Naive thymus-derived CD4-positive, alpha-beta T cell (primary cell): ENCODE measurements at regions of chr6 and their contacts with region 1.

Region 1: DNA sequence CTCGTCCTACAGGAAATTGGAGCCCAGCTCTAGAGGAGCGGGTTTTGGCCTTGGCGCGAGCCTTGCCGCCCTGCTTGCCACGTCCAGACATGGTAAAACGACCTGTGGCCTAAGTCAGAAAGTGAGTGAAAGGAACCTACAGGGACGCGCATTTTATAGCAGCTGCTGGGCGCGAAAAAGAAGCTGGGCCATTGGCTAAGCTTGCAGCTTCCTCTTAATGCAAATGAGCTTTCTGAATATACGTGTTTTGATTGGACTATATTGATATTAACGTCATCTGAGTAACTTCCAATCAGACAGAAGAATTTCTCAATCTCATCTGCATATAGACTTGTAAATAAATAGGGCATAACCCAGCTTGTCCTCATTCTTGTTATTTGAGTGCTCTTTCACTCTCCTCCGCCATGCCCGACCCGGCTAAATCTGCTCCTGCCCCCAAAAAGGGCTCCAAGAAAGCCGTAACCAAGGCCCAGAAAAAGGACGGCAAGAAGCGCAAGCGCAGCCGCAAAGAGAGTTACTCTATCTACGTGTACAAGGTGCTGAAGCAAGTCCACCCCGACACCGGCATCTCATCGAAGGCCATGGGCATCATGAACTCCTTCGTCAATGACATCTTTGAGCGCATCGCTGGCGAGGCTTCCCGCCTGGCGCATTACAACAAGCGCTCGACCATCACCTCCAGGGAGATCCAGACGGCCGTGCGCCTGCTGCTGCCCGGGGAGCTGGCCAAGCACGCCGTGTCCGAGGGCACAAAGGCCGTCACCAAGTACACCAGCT is 18.9 kb downstream of the OR2B2 start:
- DNase-seq: peak; percentile 75 to 95 (median 92)
- ATAC-seq: peak; percentile 83
- H3K4me3 ChIP-seq: peak overlapping the region; percentile 72
- H3K4me3 Mint-ChIP-seq: no peak overlapping the region
- H3K27ac ChIP-seq: peak overlapping the region; percentile 82
- H3K27ac Mint-ChIP-seq: peak overlapping the region in 1 of 9 donors; percentile 97
- H3K4me1 ChIP-seq: peaks cover 4 to 20% of the 10 kb centered on the region in 2 donors
- H3K4me1 Mint-ChIP-seq: peaks cover 9 to 55% (median 30%) of the 10 kb centered on the region in 7 donors
- H3K27me3 ChIP-seq: no peaks in the 10 kb centered on the region
- H3K27me3 Mint-ChIP-seq: peaks cover 0 to 8% (median 0%) of the 10 kb centered on the region in 5 donors

Region 2: DNA sequence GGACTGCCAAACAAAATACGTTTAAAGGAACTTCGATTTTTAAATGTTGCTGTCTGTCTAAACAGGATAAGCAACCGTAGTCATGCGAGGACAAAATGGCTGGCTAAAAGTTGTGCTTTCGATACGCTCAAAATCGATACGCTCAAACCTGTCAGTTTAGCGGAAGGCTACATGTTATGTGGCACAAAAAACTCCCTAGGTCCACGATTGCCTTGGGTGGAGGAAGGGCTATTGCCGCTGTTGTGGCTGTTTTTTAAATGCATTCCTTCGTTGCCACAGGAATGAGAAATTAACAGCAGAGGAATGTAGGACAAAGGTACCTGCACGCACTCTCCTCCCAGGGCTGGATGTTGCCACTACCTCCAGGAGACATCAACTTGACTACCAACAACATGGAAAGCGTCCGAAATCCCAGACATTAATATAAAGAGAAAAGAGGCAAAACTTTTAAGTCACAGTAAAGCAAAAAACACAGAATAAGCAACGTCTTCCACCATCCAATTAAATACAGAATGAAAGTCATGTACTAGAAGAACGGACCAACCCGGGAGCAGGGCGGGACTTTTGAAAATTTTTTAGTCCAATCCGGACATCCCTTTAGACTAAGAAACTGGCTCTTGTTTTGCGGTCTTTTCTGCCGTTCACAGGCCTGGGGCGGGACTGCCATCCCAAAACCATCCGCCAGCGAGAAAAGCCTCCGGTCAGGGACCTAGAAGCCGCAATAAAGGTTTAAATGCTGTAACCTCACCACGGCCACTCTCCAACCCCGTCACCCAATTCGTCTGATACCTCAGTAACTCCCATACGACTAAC is 1838.2 kb before region 1 on chr6:
- CTCF ChIA-PET with region 1: no interaction called
- POLR2A ChIA-PET with region 1: interaction called, 7 read pairs
- intact Hi-C with region 1: loop called in 1 of 2 experiments (anchors 5 kb)
- DNase-seq: peak; percentile 54 to 94 (median 90)
- ATAC-seq: peak; percentile 81
- H3K4me3 ChIP-seq: peak overlapping the region; percentile 93
- H3K4me3 Mint-ChIP-seq: peak overlapping the region; percentile 88 to 99 (median 95)
- H3K27ac ChIP-seq: peak overlapping the region; percentile 83
- H3K27ac Mint-ChIP-seq: peak overlapping the region; percentile 95 to 99 (median 98)
- H3K4me1 ChIP-seq: peaks cover 0 to 14% of the 10 kb centered on the region in 2 donors
- H3K4me1 Mint-ChIP-seq: peaks cover 9 to 52% (median 10%) of the 10 kb centered on the region in 7 donors
- H3K27me3 ChIP-seq: no peaks in the 10 kb centered on the region
- H3K27me3 Mint-ChIP-seq: peaks cover 0 to 10% (median 0%) of the 10 kb centered on the region in 5 donors

Region 3: GRCh38 chr6:26568601-26569432 is 1324.4 kb before region 1 on chr6:
- CTCF ChIA-PET with region 1: no interaction called
- POLR2A ChIA-PET with region 1: no interaction called
- intact Hi-C with region 1: loop called in 1 of 2 experiments (anchors 10 kb)
- DNase-seq: peak; percentile 96 to 99 (median 98)
- ATAC-seq: peak; percentile 84
- H3K4me3 ChIP-seq: peak overlapping the region; percentile 90
- H3K4me3 Mint-ChIP-seq: peak overlapping the region; percentile 90 to 100 (median 95)
- H3K27ac ChIP-seq: peak overlapping the region; percentile 74
- H3K27ac Mint-ChIP-seq: peak overlapping the region; percentile 96 to 100 (median 99)
- H3K4me1 ChIP-seq: peaks cover 0 to 3% of the 10 kb centered on the region in 2 donors
- H3K4me1 Mint-ChIP-seq: peaks cover 11 to 42% (median 26%) of the 10 kb centered on the region in 7 donors
- H3K27me3 ChIP-seq: no peaks in the 10 kb centered on the region
- H3K27me3 Mint-ChIP-seq: peaks cover 0 to 12% (median 0%) of the 10 kb centered on the region in 5 donors

Region 4: GRCh38 chr6:27157459-27158315 is 735.6 kb before region 1 on chr6:
- CTCF ChIA-PET with region 1: interaction called, 10 read pairs
- POLR2A ChIA-PET with region 1: interaction called, 29 read pairs
- intact Hi-C with region 1: loop called (anchors 1 kb)
- DNase-seq: peak in 8 of 9 donors; percentile 77 to 92 (median 87)
- ATAC-seq: peak; percentile 86
- H3K4me3 ChIP-seq: peak overlapping the region; percentile 76
- H3K4me3 Mint-ChIP-seq: peak overlapping the region; percentile 82 to 94 (median 87)
- H3K27ac ChIP-seq: peak overlapping the region; percentile 54
- H3K27ac Mint-ChIP-seq: peak overlapping the region; percentile 80 to 96 (median 92)
- H3K4me1 ChIP-seq: peaks cover 12% of the 10 kb centered on the region in 2 donors
- H3K4me1 Mint-ChIP-seq: peaks cover 29 to 47% (median 43%) of the 10 kb centered on the region in 7 donors
- H3K27me3 ChIP-seq: no peaks in the 10 kb centered on the region
- H3K27me3 Mint-ChIP-seq: peaks cover 0 to 6% (median 0%) of the 10 kb centered on the region in 5 donors

Region 5: DNA sequence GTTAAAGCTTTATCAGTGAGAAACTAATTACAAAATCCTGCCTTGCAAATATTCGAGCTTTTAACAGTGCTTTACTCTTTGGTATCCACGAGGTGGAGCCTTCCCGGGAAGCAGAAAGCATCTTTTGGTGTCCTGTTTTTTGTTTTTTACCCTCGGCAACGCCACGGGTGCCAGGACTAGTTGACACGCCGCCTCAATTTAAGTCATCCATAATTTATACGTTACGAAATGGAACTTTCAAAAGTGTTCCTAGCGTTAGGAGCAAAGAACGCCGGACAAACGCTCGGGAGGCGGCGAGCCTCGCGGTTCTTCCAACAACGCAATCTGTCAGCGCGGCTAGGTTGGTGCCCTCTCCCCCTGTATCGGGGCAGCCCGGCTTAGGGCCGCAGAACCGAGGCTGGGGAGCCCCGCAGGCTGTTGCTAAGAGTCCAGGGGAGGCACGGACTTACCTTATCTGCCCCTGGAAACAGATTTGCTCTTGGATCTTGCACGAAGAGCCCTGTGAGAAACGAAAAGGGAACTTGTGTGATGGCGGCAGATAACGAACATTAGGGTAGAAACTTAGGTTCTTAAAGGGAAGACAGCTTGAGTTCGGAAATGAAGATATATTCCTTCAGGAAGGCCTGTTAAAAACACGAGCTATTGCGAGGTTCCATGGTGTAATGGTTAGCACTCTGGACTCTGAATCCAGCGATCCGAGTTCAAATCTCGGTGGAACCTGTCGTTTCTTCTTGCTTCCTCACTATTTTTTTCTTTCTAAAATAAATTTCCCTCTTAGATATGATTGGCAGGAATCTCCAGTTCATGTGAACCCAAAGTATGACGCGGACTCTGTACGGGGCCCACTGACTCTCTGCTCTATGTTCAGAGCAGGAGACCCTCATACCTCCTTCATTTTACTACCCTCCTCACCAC is 374.1 kb before region 1 on chr6:
- CTCF ChIA-PET with region 1: no interaction called
- POLR2A ChIA-PET with region 1: interaction called, 3 read pairs
- intact Hi-C with region 1: loop called in 1 of 2 experiments (anchors 2 kb)
- DNase-seq: peak; percentile 34 to 79 (median 68)
- ATAC-seq: peak; percentile 81
- H3K4me3 ChIP-seq: peak overlapping the region; percentile 96
- H3K4me3 Mint-ChIP-seq: peak overlapping the region; percentile 84 to 97 (median 91)
- H3K27ac ChIP-seq: peak overlapping the region; percentile 67
- H3K27ac Mint-ChIP-seq: peak overlapping the region; percentile 68 to 94 (median 84)
- H3K4me1 ChIP-seq: peaks cover 7 to 11% of the 10 kb centered on the region in 2 donors
- H3K4me1 Mint-ChIP-seq: peaks cover 0 to 31% (median 18%) of the 10 kb centered on the region in 7 donors
- H3K27me3 ChIP-seq: peaks cover 0 to 3% of the 10 kb centered on the region in 2 donors
- H3K27me3 Mint-ChIP-seq: peaks cover 0 to 40% (median 22%) of the 10 kb centered on the region in 5 donors

Region 6: DNA sequence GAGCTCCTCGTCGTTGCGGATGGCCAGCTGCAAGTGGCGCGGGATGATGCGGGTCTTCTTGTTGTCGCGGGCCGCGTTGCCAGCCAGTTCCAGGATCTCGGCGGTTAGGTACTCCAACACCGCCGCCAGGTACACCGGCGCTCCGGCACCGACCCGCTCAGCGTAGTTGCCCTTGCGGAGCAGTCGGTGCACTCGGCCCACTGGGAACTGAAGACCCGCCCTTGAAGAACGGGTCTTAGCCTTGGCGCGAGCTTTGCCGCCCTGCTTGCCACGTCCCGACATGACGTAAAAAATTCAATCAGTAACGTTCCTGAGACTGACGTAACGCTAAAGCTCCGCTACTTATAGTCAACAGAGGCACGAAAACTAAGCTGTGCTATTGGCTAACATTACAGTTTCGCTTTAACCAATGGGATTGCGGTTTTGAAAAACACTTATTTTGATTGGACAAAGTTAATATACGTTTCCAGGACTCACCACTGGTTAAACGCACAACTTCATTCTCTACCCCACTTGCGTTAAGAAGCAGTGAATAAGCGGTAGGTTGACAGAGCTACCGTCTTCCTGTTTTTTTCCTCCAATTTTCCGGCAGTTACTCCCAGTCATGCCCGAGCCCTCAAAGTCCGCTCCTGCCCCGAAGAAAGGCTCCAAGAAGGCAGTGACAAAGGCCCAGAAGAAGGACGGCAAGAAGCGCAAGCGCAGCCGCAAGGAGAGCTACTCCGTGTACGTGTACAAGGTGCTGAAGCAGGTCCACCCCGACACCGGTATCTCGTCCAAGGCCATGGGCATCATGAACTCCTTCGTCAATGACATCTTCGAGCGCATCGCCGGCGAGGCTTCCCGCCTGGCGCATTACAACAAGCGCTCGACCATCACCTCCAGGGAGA is 54.9 kb before region 1 on chr6:
- CTCF ChIA-PET with region 1: interaction called, 49 read pairs
- POLR2A ChIA-PET with region 1: interaction called, 397 read pairs
- intact Hi-C with region 1: loop called (anchors 1 kb)
- DNase-seq: peak; percentile 65 to 96 (median 93)
- ATAC-seq: peak; percentile 86
- H3K4me3 ChIP-seq: peak overlapping the region; percentile 87
- H3K4me3 Mint-ChIP-seq: no peak overlapping the region
- H3K27ac ChIP-seq: peak overlapping the region; percentile 93
- H3K27ac Mint-ChIP-seq: no peak overlapping the region
- H3K4me1 ChIP-seq: peaks cover 22 to 34% of the 10 kb centered on the region in 2 donors
- H3K4me1 Mint-ChIP-seq: peaks cover 7 to 39% (median 29%) of the 10 kb centered on the region in 7 donors
- H3K27me3 ChIP-seq: no peaks in the 10 kb centered on the region
- H3K27me3 Mint-ChIP-seq: peaks cover 0 to 14% (median 7%) of the 10 kb centered on the region in 5 donors

Region 7: DNA sequence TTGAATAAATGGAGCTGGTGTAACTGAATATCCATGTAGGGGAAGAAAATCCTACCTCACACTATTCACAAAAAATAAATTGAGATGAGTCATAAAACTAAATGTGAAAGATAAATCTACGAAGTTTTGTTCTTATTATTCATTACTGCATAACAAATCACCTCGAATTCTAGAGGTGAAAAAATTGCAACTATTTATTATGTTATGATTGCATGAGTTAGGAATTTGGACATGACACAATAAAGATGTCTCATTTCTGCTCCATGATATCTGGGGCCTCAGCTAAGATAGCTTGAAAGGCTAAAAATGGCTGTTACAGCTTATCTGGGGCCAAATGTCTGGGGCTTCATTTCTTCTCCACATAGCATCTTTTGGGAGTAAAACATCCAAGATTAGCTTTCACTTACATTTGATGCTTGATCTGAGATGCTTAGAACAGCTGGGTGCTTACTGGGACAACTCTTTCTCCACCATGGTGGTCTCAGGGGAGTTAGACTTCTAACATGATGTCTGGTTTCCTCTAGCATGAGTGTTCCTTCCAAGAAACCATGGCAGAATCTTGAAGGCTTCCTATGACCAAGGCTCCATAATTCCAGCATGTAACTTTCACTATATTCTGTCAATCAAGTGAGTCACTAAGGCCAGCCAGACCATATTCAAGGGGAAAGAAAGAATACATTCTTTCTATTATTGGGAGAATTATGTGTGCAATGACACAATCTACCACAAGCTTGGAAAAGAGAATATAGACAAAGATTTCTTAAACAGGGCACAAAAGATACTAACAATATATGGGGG is 93.9 kb after region 1 on chr6:
- CTCF ChIA-PET with region 1: no interaction called
- POLR2A ChIA-PET with region 1: no interaction called
- intact Hi-C with region 1: no loop called
- DNase-seq: no peak
- ATAC-seq: no peak
- H3K4me3 ChIP-seq: no peak overlapping the region
- H3K4me3 Mint-ChIP-seq: no peak overlapping the region
- H3K27ac ChIP-seq: no peak overlapping the region
- H3K27ac Mint-ChIP-seq: no peak overlapping the region
- H3K4me1 ChIP-seq: no peaks in the 10 kb centered on the region
- H3K4me1 Mint-ChIP-seq: peaks cover 0 to 1% (median 0%) of the 10 kb centered on the region in 7 donors
- H3K27me3 ChIP-seq: peaks cover 0 to 3% of the 10 kb centered on the region in 2 donors
- H3K27me3 Mint-ChIP-seq: peaks cover 38 to 72% (median 61%) of the 10 kb centered on the region in 5 donors

Region 8: GRCh38 chr6:28489366-28490204 is 596.3 kb after region 1 on chr6:
- CTCF ChIA-PET with region 1: no interaction called
- POLR2A ChIA-PET with region 1: no interaction called
- intact Hi-C with region 1: no loop called
- DNase-seq: peak; percentile 25 to 49 (median 39)
- ATAC-seq: peak; percentile 75
- H3K4me3 ChIP-seq: peak overlapping the region; percentile 42
- H3K4me3 Mint-ChIP-seq: peak overlapping the region; percentile 78 to 88 (median 83)
- H3K27ac ChIP-seq: peak overlapping the region; percentile 67
- H3K27ac Mint-ChIP-seq: peak overlapping the region; percentile 75 to 90 (median 82)
- H3K4me1 ChIP-seq: peaks cover 0 to 14% of the 10 kb centered on the region in 2 donors
- H3K4me1 Mint-ChIP-seq: peaks cover 16 to 32% (median 20%) of the 10 kb centered on the region in 7 donors
- H3K27me3 ChIP-seq: peaks cover 0 to 4% of the 10 kb centered on the region in 2 donors
- H3K27me3 Mint-ChIP-seq: peaks cover 17 to 73% (median 63%) of the 10 kb centered on the region in 5 donors